ENCODE measurements at regions of chr12 and their contacts with region 1.

Region 1: DNA sequence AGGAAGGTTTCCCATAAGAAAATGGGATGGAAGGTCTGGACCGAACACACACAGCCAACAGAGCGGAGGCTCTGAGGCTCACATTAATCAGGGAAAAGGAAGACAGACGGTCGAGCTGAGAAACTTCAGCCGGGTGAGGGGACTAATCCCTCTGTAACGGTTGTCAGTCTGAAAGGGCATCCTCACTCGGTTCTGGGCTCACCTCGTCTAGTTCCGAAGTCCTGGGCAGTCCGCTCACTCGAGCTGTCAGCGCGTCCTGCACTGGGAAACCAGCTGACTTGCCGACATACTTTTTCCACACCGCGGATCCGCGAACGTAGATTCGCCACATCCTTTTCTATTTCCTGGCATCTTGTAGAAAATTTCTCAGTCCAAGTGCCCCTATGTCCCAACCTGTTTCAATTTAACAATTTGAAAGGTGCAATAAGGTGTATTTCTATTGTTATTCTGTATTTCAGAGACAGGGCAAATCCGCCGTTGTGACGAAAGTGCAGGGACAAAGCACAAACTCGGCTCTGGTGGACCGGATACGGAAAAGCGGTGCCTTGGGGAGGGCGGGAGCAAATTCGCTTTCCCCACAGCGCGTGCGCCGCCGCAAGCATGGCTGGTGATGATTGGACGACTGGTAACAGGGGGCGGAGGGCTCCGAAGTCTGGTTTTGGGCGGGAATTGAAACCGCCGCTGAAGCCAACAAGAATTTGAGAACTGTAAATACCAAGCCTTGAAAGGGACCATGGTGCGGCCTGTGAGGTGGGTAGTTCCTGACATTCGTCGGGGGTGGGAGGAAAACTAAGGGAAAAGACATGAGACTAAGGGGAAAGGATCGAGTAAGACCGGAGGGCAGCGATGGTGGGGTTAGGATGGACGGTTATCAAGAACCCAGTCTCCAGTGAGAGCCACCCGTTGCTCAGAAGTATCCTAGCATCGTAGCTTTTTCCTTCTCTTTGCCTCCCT is at the start of gene RAD51AP1:
- DNase-seq: peak; percentile 98
- H3K4me3 ChIP-seq: peak within 1 kb of the TSS; percentile 93
- H3K27ac ChIP-seq: peak within 1 kb of the TSS; percentile 82
- H3K4me1 ChIP-seq: peaks cover 62% of the 10 kb centered on the region
- CTCF ChIP-seq: no peak
- total RNA-seq, gene RAD51AP1: 81.3 and 98.6 TPM in 2 replicates

Region 2: DNA sequence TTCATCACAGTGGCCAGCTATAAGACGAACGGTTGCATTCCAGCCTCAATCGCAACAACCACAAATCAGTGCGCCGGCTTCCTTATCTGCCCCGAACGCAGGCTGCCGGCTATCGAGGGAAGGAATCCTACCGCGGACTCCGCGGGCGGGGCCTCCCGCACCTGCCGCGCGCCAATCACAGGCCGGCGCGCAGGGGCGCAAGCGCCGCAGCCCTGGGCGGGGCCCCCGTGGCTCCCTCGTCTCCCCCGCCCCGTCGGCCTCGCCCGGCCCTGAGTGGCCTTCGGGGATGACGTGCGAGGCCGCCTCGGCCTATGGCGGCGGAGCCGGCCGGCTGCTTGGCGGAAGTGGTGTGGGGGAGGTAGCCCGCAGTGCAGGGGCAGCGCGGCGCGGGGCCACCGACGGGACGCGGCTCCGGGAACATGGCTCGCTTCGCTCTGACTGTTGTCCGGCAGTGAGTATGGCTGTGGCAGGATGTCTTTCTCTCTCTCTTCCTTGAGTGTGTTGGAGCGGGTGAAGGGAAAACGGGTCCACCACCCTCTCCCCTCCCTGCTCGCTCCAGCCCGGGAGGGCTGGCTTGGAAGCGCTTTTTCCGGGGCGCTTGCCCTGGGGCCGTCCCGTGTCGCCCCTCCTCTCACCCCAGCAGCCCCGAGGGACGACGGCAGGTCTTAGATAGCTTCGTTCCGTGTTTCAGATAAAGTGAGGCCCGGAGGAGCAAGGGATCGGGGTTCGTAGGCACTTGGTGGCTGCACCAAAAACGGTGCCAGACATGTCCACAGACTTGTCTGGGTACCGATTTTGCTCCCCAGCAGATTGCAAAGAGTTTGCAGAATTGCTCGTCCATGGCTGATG is 217.4 kb before region 1 on chr12 and contains the start of gene TIGAR:
- CTCF ChIA-PET with region 1: no interaction called
- POLR2A ChIA-PET with region 1: no interaction called
- intact Hi-C with region 1: loop called (anchors 5 kb)
- DNase-seq: peak; percentile 96
- H3K4me3 ChIP-seq: peak within 1 kb of the TSS; percentile 85
- H3K27ac ChIP-seq: peak within 1 kb of the TSS; percentile 59
- H3K4me1 ChIP-seq: peaks cover 23% of the 10 kb centered on the region
- CTCF ChIP-seq: no peak
- total RNA-seq, gene TIGAR: 8.0 and 15.4 TPM in 2 replicates

Region 3: GRCh38 chr12:4604684-4605193 is 66.3 kb after region 1 on chr12:
- CTCF ChIA-PET with region 1: no interaction called
- POLR2A ChIA-PET with region 1: no interaction called
- intact Hi-C with region 1: loop called (anchors 1 kb)
- DNase-seq: peak; percentile 89
- H3K4me3 ChIP-seq: peak overlapping the region; percentile 83
- H3K27ac ChIP-seq: no peak overlapping the region
- H3K4me1 ChIP-seq: no peaks in the 10 kb centered on the region
- CTCF ChIP-seq: peak; percentile 97

Region 4: GRCh38 chr12:4648501-4649357 is 110.2 kb after region 1 on chr12 and contains the starts of genes AKAP3 and NDUFA9:
- CTCF ChIA-PET with region 1: interaction called, 3 read pairs
- POLR2A ChIA-PET with region 1: interaction called, 3 read pairs
- intact Hi-C with region 1: loop called (anchors 2 kb)
- DNase-seq: peak; percentile 81
- H3K4me3 ChIP-seq: peak within 1 kb of the TSS; percentile 84
- H3K27ac ChIP-seq: peak within 1 kb of the TSS; percentile 59
- H3K4me1 ChIP-seq: peaks cover 47% of the 10 kb centered on the region
- CTCF ChIP-seq: no peak
- total RNA-seq, gene AKAP3: 0.92 and 1.2 TPM in 2 replicates
- total RNA-seq, gene NDUFA9: 69.1 and 72.0 TPM in 2 replicates

Region 5: DNA sequence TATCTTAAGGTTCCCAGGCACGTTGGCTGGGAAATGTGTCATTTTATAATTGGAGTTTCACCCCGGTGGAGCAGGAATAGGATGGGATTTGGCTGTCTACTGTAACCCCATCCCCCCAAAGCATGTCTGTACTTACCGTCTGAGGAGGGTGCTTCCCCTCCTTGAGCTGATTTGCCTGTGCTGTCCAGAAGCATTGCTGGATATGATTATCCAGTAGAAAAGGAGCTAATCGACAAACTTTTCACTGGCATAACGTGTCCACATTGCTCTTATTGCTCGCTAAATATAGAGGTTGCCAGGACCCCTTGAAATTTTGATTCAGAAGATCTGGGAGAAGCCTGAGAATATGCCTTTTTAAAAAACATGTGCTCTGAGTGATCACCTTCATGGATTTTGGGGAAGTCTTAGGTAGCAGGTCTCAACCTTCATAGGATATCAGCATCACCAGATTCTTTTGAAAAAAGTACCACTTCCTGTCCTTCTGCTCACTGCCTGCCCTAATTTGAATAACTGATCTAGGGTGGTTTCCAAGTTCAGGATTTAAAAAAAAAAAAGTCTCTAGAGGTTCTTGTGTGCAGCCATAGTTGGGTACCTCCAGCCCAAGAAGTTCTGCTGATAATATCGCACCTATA is 290.8 kb after region 1 on chr12:
- CTCF ChIA-PET with region 1: no interaction called
- POLR2A ChIA-PET with region 1: no interaction called
- intact Hi-C with region 1: loop called (anchors 5 kb)
- DNase-seq: peak; percentile 90
- H3K4me3 ChIP-seq: peak overlapping the region; percentile 82
- H3K27ac ChIP-seq: peak overlapping the region; percentile 98
- H3K4me1 ChIP-seq: peaks cover 54% of the 10 kb centered on the region
- CTCF ChIP-seq: no peak